Gastrocnemius medialis (tissue), 4 donors: ENCODE measurements at regions of chr14 and their contacts with region 1.

Region 1: GRCh38 chr14:100417466-100417865 is 94.3 kb downstream of the SLC25A47 start:
- DNase-seq: peak; percentile 14 to 43
- ATAC-seq: peak; percentile 69 to 75
- H3K4me3 ChIP-seq: no peak overlapping the region
- H3K27ac ChIP-seq: no peak overlapping the region
- H3K4me1 ChIP-seq: no peaks in the 10 kb centered on the region
- H3K27me3 ChIP-seq: no peaks in the 10 kb centered on the region
- CTCF ChIP-seq: peak in 1 of 5 experiments; percentile 28
- POLR2A ChIP-seq: no peak

Region 2: DNA sequence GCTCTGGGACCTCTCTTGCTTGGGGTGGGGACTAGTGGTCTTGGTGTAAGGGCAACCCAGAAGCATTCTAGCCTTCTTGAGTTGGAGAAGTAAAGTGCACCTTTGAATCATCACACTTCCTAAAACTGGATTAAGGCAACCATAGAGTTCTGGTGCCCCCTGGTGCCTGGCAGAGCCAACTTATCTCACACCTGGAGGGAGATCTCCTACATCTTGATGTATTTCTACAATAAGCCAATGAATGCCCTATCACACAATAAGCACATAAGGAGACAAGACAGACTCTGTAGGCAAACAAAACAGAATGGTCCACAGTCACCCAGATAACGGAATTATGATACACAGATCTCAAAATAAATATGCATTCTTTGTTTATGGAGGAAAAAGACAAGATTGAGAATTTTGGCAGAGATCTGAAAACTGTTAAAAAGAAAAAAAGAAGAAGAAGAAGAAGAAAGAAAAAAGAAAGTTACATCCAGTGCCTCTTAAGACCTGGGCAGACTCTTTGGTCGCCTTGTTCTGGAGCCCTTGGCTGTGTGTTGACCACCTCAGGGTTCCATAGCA is 1248.1 kb after region 1 on chr14:
- in situ Hi-C with region 1: loop called in 1 of 4 experiments (anchors 25 kb)
- intact Hi-C with region 1: no loop called
- DNase-seq: no peak
- ATAC-seq: no peak
- H3K4me3 ChIP-seq: no peak overlapping the region
- H3K27ac ChIP-seq: no peak overlapping the region
- H3K4me1 ChIP-seq: no peaks in the 10 kb centered on the region
- H3K27me3 ChIP-seq: peaks cover 11 to 31% (median 14%) of the 10 kb centered on the region in 3 donors
- CTCF ChIP-seq: no peak
- POLR2A ChIP-seq: no peak